Astrocyte of the cerebellum (primary cell): ENCODE measurements at regions of chr1 and their contacts with region 1.

Region 1: DNA sequence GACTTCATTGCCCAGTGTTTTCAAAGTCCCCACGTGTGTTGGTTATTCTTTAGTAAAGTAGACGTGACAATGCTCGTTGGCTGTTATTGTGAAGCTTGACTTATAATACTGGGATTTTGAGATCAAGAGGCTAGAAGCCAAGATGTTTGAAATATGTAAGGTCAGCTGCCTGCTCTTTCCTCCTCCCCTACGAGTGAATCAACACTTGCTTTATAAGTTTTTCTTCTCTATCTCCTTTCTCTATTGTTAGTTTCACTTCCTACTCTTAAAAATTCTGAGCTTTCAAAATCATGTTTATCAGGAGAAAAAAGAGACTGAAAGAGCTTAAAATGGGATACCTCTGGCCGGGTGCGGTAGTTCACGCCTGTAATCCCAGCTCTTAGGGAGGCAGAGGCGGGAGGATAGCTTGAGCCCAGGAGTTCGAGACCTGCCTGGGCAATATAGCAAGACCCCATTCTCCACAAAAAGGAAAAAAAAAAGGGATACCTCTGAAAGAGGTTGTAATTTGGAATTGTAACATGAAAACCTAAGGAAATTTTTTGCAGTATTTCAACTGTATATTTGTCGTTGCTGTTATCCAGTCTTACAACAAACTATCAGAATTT is 72.0 kb downstream of the EPB41 start:
- DNase-seq: no peak
- H3K4me3 ChIP-seq: no peak overlapping the region
- CTCF ChIP-seq: no peak

Region 2: GRCh38 chr1:28933277-28933676 is 53.1 kb before region 1 on chr1:
- in situ Hi-C with region 1: no loop called
- DNase-seq: no peak
- H3K4me3 ChIP-seq: no peak overlapping the region
- CTCF ChIP-seq: no peak

Region 3: GRCh38 chr1:29029667-29030066 is 43.3 kb after region 1 on chr1:
- in situ Hi-C with region 1: loop called (anchors 5 kb)
- DNase-seq: no peak
- H3K4me3 ChIP-seq: no peak overlapping the region
- CTCF ChIP-seq: no peak